ENCODE measurements at regions of chr13 and their contacts with region 1.

Region 1: GRCh38 chr13:52011632-52012511 is at the start of gene ALG11:
- DNase-seq: peak; percentile 98 to 100 (median 99)
- ATAC-seq: peak; percentile 98
- H3K4me3 ChIP-seq: peak within 1 kb of the TSS; percentile 70 to 88
- H3K4me3 Mint-ChIP-seq: peak within 1 kb of the TSS; percentile 99
- H3K27ac ChIP-seq: peak within 1 kb of the TSS; percentile 57 to 75
- H3K27ac Mint-ChIP-seq: peak within 1 kb of the TSS; percentile 95
- H3K4me1 ChIP-seq: peaks cover 15% of the 10 kb centered on the region
- H3K4me1 Mint-ChIP-seq: peaks cover 35% of the 10 kb centered on the region
- H3K27me3 ChIP-seq: no peaks in the 10 kb centered on the region
- H3K27me3 Mint-ChIP-seq: peaks cover 7% of the 10 kb centered on the region
- CTCF ChIP-seq: no peak
- total RNA-seq, gene ALG11: 34.0 to 35.1 TPM

Region 2: DNA sequence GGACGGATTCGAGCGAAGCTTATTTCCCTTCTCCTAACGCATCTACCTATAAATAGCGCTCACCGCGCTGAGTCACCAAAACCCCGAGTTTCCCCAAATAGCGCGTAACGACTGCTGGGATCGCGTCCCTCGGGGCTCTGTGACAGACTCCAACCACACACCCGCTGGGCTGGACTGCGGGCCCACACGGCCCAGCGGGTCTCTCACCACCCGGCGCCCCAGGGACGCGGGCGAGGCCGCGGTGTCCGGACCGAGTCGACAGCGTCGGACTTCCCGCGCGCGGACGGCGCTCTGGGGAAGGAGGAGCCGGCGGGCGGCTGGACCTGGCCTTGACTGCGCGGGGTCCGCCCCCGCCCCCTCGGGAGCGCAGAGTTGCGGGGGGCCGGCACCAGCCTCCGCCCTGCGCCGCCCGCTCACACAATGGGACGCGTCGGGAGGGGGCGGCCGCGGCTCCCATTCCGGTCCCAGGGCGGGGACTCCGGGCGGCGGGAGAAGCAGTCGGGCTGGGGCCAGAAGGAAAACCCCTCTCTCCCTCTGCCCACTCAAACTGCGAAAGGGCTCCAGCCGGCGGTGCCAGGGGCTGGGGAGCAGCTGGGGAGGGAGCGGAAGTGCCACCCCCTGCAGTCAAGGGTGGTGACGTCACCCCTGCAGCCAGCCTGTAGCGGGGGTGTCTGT is 1887.9 kb before region 1 on chr13:
- CTCF ChIA-PET with region 1: no interaction called
- POLR2A ChIA-PET with region 1: no interaction called
- intact Hi-C with region 1: loop called in 1 of 2 experiments (anchors 10 kb)
- DNase-seq: peak in 8 of 9 experiments; percentile 43 to 91 (median 72)
- ATAC-seq: peak; percentile 65
- H3K4me3 ChIP-seq: peak overlapping the region; percentile 87 to 93
- H3K4me3 Mint-ChIP-seq: peak overlapping the region; percentile 90
- H3K27ac ChIP-seq: peak overlapping the region; percentile 90 to 92
- H3K27ac Mint-ChIP-seq: peak overlapping the region; percentile 96
- H3K4me1 ChIP-seq: peaks cover 24% of the 10 kb centered on the region
- H3K4me1 Mint-ChIP-seq: peaks cover 44% of the 10 kb centered on the region
- H3K27me3 ChIP-seq: peaks cover 12 to 19% of the 10 kb centered on the region in 2 experiments
- H3K27me3 Mint-ChIP-seq: peaks cover 15% of the 10 kb centered on the region
- CTCF ChIP-seq: no peak

Region 3: DNA sequence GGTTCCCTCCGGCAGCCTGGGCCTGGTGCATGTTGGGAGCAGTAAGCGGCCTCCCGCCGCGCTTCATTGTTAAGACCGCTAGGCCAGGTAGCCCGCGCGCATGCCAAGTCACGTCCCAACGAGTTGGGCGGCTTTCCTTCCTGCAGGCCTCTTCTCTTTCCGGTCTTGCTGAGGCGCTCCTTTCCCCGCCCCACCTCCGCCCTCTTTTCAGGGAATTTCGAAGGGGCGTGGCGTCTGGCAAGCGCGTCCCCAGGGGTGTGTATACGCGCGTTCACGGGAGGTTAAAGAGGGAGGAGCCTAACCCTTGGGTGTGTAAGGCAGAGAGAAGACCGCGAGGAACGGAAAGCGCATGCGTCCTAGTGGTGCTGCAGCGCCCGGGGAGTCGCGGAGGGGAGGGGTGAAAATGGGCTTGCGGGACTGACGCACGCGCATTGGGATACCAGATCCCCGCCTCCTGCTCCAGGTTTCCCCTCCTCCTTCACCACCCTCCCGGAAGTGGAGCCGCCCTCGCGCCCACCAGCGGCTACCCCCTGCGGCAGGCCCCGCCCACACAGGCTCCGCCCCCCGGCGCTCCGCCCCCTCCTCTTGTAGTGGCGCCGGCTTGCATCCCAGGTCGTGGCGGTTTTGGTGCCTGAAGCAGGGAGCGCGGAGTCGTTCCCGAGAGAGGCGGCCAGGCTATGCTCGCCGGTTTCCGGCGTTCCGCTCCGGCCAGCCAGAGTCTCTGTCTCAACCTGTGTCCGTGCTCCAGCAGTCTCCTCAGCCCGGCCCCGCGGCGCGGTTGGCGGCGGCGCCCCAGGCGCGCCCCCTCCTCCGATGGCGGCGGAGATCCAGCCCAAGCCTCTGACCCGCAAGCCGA is 427.8 kb before region 1 on chr13 and contains the start of gene WDFY2:
- CTCF ChIA-PET with region 1: no interaction called
- POLR2A ChIA-PET with region 1: no interaction called
- intact Hi-C with region 1: loop called (anchors 1 to 5 kb)
- DNase-seq: peak; percentile 98 to 100 (median 99)
- ATAC-seq: peak; percentile 82
- H3K4me3 ChIP-seq: peak within 1 kb of the TSS; percentile 71 to 81
- H3K4me3 Mint-ChIP-seq: peak within 1 kb of the TSS; percentile 99
- H3K27ac ChIP-seq: peak within 1 kb of the TSS; percentile 83 to 89
- H3K27ac Mint-ChIP-seq: peak within 1 kb of the TSS; percentile 100
- H3K4me1 ChIP-seq: peaks cover 11% of the 10 kb centered on the region
- H3K4me1 Mint-ChIP-seq: peaks cover 35% of the 10 kb centered on the region
- H3K27me3 ChIP-seq: no peaks in the 10 kb centered on the region
- H3K27me3 Mint-ChIP-seq: no peaks in the 10 kb centered on the region
- CTCF ChIP-seq: no peak
- total RNA-seq, gene WDFY2: 17.2 to 18.6 TPM

Region 4: DNA sequence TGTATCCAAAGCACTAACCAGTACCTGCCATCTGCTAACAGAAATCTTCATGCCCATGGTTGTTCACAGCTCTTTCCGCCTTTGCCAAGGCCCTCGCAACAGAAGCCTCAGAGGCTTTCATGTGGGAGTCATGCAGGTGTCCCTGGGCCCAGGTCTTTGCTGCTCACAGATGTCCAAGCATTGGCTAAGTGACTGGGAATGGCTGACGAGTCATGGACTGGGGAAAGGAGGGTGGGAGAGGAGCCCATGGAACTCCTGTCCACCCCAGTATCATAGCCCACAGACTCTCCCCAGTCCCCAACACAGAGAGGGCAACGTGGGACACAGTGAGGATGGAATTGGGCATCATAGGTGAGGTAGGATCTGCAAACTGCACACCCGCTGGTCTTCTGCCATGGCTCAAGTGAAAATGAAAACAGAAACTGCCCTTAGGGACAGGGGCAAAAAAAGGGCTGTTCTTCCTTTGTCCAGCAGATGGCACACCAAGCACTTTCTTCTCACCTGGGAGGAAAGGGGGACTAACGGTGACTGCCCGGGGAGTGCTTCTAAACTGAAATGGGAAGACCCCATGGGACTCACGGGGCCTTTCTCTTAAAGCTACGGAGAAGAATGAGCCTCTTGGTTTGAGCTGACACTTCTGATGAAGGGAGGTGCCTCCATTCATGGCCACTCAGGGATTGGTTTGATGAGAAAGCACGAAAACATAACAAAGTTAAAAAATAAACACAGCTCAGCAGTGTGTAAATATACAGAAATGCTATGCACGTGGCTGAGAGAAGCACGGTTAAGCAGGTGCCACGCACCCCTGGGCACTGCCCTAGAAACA is 196.8 kb before region 1 on chr13:
- CTCF ChIA-PET with region 1: interaction called, 3 read pairs
- POLR2A ChIA-PET with region 1: no interaction called
- intact Hi-C with region 1: loop called (anchors 5 kb)
- DNase-seq: peak; percentile 49 to 89 (median 76)
- ATAC-seq: peak; percentile 82
- H3K4me3 ChIP-seq: peak overlapping the region; percentile 12 to 23
- H3K4me3 Mint-ChIP-seq: peak overlapping the region; percentile 70
- H3K27ac ChIP-seq: peak overlapping the region in 1 of 2 experiments; percentile 18
- H3K27ac Mint-ChIP-seq: peak overlapping the region; percentile 92
- H3K4me1 ChIP-seq: peaks cover 63% of the 10 kb centered on the region
- H3K4me1 Mint-ChIP-seq: peaks cover 79% of the 10 kb centered on the region
- H3K27me3 ChIP-seq: no peaks in the 10 kb centered on the region
- H3K27me3 Mint-ChIP-seq: no peaks in the 10 kb centered on the region
- CTCF ChIP-seq: peak; percentile 92

Region 5: GRCh38 chr13:51825165-51825592 is 186.7 kb before region 1 on chr13:
- CTCF ChIA-PET with region 1: no interaction called
- POLR2A ChIA-PET with region 1: interaction called, 3 read pairs
- intact Hi-C with region 1: loop called in 1 of 2 experiments (anchors 5 kb)
- DNase-seq: peak in 2 of 9 experiments; percentile 60 to 77
- ATAC-seq: peak; percentile 60
- H3K4me3 ChIP-seq: peak overlapping the region; percentile 55 to 59
- H3K4me3 Mint-ChIP-seq: peak overlapping the region; percentile 91
- H3K27ac ChIP-seq: peak overlapping the region; percentile 64 to 74
- H3K27ac Mint-ChIP-seq: peak overlapping the region; percentile 97
- H3K4me1 ChIP-seq: peaks cover 80% of the 10 kb centered on the region
- H3K4me1 Mint-ChIP-seq: peaks cover 91% of the 10 kb centered on the region
- H3K27me3 ChIP-seq: no peaks in the 10 kb centered on the region
- H3K27me3 Mint-ChIP-seq: no peaks in the 10 kb centered on the region
- CTCF ChIP-seq: no peak

Region 6: DNA sequence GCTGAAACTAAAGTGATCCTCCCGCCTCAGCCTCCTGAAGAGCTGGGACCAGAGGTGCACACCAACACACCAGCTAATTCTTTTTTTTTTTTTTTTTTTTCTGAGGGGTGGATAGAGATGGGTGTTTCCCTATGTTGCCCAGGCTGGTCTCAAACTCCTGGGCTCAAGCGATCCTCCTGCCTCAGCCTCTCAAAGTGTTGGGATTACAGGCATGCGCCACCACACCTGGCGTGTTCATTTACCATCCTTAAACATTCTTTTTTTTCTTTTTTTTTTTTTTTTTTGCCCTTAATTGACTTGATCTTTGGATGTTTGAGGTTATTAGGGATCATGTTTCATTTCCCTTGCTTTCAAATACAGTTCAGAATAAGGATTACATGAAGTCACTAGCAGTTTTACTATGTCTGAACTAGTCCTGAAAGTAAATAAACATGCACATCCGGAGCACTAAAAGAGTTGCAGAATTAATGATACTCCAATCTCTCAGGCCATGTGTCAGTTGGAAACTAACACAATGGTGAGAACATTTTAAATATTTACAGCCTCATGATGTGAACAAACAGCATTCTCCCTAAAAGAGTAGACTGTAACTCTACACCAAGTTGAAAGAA is 22.8 kb after region 1 on chr13:
- CTCF ChIA-PET with region 1: no interaction called
- POLR2A ChIA-PET with region 1: no interaction called
- intact Hi-C with region 1: no loop called
- DNase-seq: no peak
- ATAC-seq: no peak
- H3K4me3 ChIP-seq: no peak overlapping the region
- H3K4me3 Mint-ChIP-seq: no peak overlapping the region
- H3K27ac ChIP-seq: no peak overlapping the region
- H3K27ac Mint-ChIP-seq: no peak overlapping the region
- H3K4me1 ChIP-seq: no peaks in the 10 kb centered on the region
- H3K4me1 Mint-ChIP-seq: peaks cover 5% of the 10 kb centered on the region
- H3K27me3 ChIP-seq: no peaks in the 10 kb centered on the region
- H3K27me3 Mint-ChIP-seq: no peaks in the 10 kb centered on the region
- CTCF ChIP-seq: no peak

Region 7: DNA sequence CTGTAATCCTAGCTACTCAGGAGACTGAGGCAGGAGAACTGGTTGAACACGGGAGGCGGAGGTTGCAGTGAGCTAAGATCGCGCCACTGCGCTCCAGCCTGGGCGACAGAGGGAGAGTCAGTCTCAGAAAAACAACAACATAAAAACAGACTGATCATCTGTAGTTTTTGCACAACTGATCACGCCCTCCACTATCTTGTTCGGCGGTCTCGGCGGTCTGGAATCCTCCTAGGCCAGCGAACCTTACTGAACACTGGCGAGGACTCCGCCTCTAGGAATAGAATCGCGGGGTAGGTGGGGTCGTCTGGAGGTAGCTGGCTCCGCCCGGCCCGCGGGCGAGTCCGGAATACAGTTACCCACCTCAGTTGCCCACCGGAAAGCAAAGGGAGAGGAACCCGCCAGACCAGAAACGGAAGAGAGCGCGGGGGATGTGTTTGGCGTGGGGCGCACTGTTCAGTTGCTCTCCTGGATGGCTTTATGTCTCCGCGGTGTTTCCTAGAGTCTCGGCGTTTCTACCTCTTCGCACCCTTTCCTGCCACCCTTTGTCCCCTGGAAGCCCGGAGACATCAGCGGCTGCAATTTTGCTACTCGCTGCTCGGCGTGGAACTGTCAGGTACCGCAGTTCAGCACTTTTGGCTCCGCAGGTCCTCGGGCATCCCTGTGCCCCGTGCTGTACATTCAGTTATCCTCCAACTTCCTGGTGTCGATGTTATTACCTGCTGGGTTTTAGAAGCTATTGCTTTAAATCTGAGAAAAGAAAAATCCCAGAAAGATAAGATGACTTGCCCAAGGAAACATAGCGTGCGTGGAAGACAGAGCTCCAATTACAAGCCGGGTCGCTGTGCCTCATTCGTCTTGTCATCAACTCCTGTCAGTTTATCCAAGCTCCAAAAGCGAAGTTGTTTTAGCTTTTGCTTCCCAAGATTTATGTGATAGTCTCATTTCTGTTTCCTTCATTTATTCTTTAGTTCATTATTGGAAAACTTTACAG is 605.5 kb after region 1 on chr13:
- CTCF ChIA-PET with region 1: no interaction called
- POLR2A ChIA-PET with region 1: no interaction called
- intact Hi-C with region 1: loop called (anchors 1 to 10 kb)
- DNase-seq: peak; percentile 71 to 91 (median 85)
- ATAC-seq: peak; percentile 94
- H3K4me3 ChIP-seq: peak overlapping the region; percentile 80 to 94
- H3K4me3 Mint-ChIP-seq: peak overlapping the region; percentile 99
- H3K27ac ChIP-seq: peak overlapping the region; percentile 59 to 76
- H3K27ac Mint-ChIP-seq: peak overlapping the region; percentile 98
- H3K4me1 ChIP-seq: peaks cover 7% of the 10 kb centered on the region
- H3K4me1 Mint-ChIP-seq: peaks cover 46% of the 10 kb centered on the region
- H3K27me3 ChIP-seq: no peaks in the 10 kb centered on the region
- H3K27me3 Mint-ChIP-seq: no peaks in the 10 kb centered on the region
- CTCF ChIP-seq: no peak

Region 8: GRCh38 chr13:52652196-52652979 is 640.5 kb after region 1 on chr13 and contains the start of gene SUGT1:
- CTCF ChIA-PET with region 1: no interaction called
- POLR2A ChIA-PET with region 1: no interaction called
- intact Hi-C with region 1: loop called (anchors 1 to 5 kb)
- DNase-seq: peak; percentile 88 to 98 (median 95)
- ATAC-seq: peak; percentile 92
- H3K4me3 ChIP-seq: peak within 1 kb of the TSS; percentile 70 to 87
- H3K4me3 Mint-ChIP-seq: no peak within 1 kb of the TSS
- H3K27ac ChIP-seq: peak within 1 kb of the TSS; percentile 94 to 96
- H3K27ac Mint-ChIP-seq: no peak within 1 kb of the TSS
- H3K4me1 ChIP-seq: peaks cover 32% of the 10 kb centered on the region
- H3K4me1 Mint-ChIP-seq: peaks cover 7% of the 10 kb centered on the region
- H3K27me3 ChIP-seq: no peaks in the 10 kb centered on the region
- H3K27me3 Mint-ChIP-seq: no peaks in the 10 kb centered on the region
- CTCF ChIP-seq: peak; percentile 68
- total RNA-seq, gene SUGT1: 17.8 to 20.0 TPM

Region 9: DNA sequence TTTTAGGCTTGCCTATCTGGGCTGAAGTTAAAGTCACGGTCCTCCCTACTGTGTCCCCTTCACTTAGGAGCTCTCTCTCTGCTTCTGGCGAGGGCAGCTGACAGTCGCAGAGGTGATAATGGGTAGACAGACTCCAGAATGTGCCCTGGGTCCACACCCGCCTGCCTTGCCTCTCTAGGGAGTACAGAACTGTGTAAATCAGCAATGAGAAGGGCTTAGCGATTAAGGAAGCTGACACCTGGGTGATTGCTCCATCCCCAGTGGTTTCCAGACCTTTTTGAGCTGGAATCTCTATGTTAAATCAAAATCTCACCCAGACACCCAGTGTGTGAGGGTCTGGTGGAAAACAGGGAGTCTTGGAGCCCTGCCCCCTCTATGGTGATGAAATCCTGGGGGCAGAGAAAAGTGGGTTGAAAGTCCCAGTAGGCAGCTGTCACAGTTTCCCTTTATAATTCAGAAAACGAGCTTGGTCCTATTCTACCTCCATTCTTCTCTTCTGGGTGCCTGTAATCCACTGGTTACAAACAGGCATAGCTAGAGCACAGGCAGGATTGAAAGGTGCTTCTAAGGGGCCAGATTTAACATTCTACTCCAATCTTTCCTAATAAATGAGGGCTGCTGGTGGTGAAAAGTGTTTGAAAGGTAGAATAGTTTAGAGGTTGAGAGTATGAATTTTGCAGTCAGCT is 1063.6 kb after region 1 on chr13:
- CTCF ChIA-PET with region 1: no interaction called
- POLR2A ChIA-PET with region 1: no interaction called
- intact Hi-C with region 1: no loop called
- DNase-seq: no peak
- ATAC-seq: no peak
- H3K4me3 ChIP-seq: no peak overlapping the region
- H3K4me3 Mint-ChIP-seq: no peak overlapping the region
- H3K27ac ChIP-seq: no peak overlapping the region
- H3K27ac Mint-ChIP-seq: no peak overlapping the region
- H3K4me1 ChIP-seq: no peaks in the 10 kb centered on the region
- H3K4me1 Mint-ChIP-seq: no peaks in the 10 kb centered on the region
- H3K27me3 ChIP-seq: no peaks in the 10 kb centered on the region
- H3K27me3 Mint-ChIP-seq: no peaks in the 10 kb centered on the region
- CTCF ChIP-seq: no peak